Naive thymus-derived CD8-positive, alpha-beta T cell (primary cell): ENCODE measurements at regions of chr2 and their contacts with region 1.

Region 1: DNA sequence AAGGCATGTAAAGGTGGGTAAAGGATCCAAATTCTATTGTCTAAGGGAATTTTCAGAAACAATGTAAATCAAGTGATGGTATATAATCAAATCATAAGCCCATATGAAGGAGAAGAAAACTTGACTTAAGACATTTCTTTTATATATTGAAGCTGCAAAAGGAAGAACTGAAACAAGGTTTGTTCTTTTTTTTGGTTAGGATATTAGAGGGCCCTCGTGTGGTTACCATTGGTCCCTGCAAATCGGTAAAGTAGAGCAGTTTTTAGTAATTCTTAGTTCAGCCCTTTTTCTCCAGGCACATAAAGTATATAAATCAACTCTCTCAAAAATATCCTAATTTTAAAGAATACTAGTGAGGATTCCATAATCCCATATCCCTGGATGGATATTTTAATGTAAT is 105.6 kb upstream of the STK17B start:
- DNase-seq: peak in 9 of 10 donors; percentile 12 to 74 (median 51)
- ATAC-seq: peak; percentile 13 to 53
- H3K4me3 Mint-ChIP-seq: peak overlapping the region in 5 of 10 donors; percentile 1 to 79 (median 59)
- H3K27ac Mint-ChIP-seq: peak overlapping the region; percentile 24 to 96 (median 91)
- H3K4me1 Mint-ChIP-seq: peaks cover 27 to 51% (median 40%) of the 10 kb centered on the region in 4 donors
- H3K27me3 Mint-ChIP-seq: no peaks in the 10 kb centered on the region

Region 2: GRCh38 chr2:196233021-196233804 is 43.8 kb before region 1 on chr2:
- POLR2A ChIA-PET with region 1: interaction called, 27 read pairs
- DNase-seq: no peak
- ATAC-seq: peak in 1 of 2 donors; percentile 10
- H3K4me3 Mint-ChIP-seq: peak overlapping the region in 6 of 10 donors; percentile 4 to 59 (median 43)
- H3K27ac Mint-ChIP-seq: peak overlapping the region; percentile 87 to 100 (median 96)
- H3K4me1 Mint-ChIP-seq: peaks cover 26 to 93% (median 86%) of the 10 kb centered on the region in 4 donors
- H3K27me3 Mint-ChIP-seq: no peaks in the 10 kb centered on the region

Region 3: DNA sequence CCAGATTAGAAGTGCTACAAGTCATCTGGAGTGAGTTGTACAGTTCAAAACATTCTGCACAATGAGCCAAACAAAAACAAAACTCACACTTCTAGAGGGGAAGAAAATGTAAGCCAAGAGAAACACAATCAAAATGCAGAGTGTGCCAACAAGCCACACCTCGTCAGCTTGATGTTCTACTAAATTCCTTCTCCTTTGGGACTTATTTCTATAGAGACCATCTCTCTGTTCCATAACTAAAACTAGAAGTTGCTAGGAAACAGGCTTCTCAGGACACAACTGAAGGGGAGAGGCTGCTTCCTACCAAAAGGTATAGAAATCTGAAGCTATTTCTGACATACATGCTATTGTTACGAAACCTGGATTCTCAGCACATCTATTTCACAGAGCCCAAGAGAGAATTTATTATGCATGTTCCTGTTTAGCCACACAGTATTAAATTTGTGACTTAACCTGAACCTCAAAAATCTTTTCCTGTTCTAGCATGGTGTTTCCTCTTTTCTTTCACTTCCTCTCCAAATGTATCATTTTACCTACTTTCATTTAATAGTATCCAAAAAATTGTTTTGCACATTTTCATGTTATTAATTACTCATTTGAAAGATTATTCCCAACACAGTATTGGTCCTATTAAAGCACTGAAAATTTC is 151.1 kb after region 1 on chr2:
- POLR2A ChIA-PET with region 1: no interaction called
- DNase-seq: no peak
- ATAC-seq: no peak
- H3K4me3 Mint-ChIP-seq: no peak overlapping the region
- H3K27ac Mint-ChIP-seq: no peak overlapping the region
- H3K4me1 Mint-ChIP-seq: peaks cover 0 to 15% (median 7%) of the 10 kb centered on the region in 4 donors
- H3K27me3 Mint-ChIP-seq: peaks cover 2 to 15% (median 7%) of the 10 kb centered on the region in 5 donors

Region 4: DNA sequence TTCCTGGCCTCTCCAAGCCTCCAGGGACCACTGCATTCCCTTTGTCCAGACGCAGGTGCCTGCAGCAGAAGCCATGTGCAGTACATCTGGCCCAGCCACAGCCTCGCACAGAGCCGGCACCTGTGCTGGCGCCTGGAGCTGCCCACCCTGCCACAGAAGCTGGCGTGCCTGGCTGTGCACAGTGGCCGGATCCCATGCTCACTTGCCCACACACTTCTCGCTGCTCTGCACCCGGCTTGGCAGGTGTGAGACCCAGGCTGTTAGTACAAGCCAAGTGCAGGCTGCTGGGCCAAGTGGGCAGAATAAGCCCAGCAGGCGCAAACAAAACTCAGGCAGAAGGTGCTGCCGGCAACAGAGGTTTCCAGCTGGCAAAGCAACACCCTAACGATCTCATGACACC is 238.0 kb after region 1 on chr2:
- POLR2A ChIA-PET with region 1: no interaction called
- DNase-seq: no peak
- ATAC-seq: no peak
- H3K4me3 Mint-ChIP-seq: no peak overlapping the region
- H3K27ac Mint-ChIP-seq: no peak overlapping the region
- H3K4me1 Mint-ChIP-seq: no peaks in the 10 kb centered on the region
- H3K27me3 Mint-ChIP-seq: peaks cover 8 to 20% (median 12%) of the 10 kb centered on the region in 5 donors